OCI-LY7 (cell line): ENCODE measurements at regions of chr3 and their contacts with region 1.

Region 1: GRCh38 chr3:194682694-194683310 is 2.9 kb upstream of the FAM43A start:
- DNase-seq: peak; percentile 89
- H3K4me3 ChIP-seq: no peak overlapping the region
- H3K27ac ChIP-seq: no peak overlapping the region
- H3K4me1 ChIP-seq: peaks cover 37% of the 10 kb centered on the region
- CTCF ChIP-seq: peak; percentile 96

Region 2: GRCh38 chr3:194671900-194672808 is 10.6 kb before region 1 on chr3 and contains the start of gene LSG1:
- CTCF ChIA-PET with region 1: interaction called, 3 read pairs
- POLR2A ChIA-PET with region 1: interaction called, 10 read pairs
- intact Hi-C with region 1: no loop called
- DNase-seq: peak; percentile 97
- H3K4me3 ChIP-seq: peak within 1 kb of the TSS; percentile 91
- H3K27ac ChIP-seq: peak within 1 kb of the TSS; percentile 50
- H3K4me1 ChIP-seq: peaks cover 19% of the 10 kb centered on the region
- CTCF ChIP-seq: no peak
- total RNA-seq, gene LSG1: 52.9 and 59.4 TPM in 2 replicates

Region 3: DNA sequence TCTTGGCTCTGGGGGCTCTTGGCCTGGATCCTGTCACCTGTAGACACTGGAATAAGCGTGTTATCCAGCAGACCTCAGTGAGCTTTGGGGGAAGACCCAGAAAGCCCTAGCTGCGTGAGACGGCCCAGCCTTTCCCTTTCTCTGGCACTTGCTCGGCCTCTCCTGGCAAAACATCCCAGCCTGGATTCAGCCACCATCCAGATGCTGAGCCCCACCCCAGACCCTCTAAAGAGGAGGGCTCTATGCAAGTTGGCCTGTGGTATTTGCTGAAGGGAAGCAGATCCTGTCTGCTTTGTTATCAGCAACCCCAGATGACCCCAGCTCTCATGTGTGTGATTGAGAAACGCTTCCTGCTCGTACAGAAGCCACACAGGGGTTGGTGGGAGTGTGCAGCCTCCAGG is 270.0 kb after region 1 on chr3:
- CTCF ChIA-PET with region 1: interaction called, 3 read pairs
- POLR2A ChIA-PET with region 1: no interaction called
- intact Hi-C with region 1: loop called (anchors 1 kb)
- DNase-seq: no peak
- H3K4me3 ChIP-seq: no peak overlapping the region
- H3K27ac ChIP-seq: no peak overlapping the region
- H3K4me1 ChIP-seq: no peaks in the 10 kb centered on the region
- CTCF ChIP-seq: no peak

Region 4: GRCh38 chr3:195106418-195106906 is 423.7 kb after region 1 on chr3:
- CTCF ChIA-PET with region 1: interaction called, 4 read pairs
- POLR2A ChIA-PET with region 1: interaction called, 3 read pairs
- intact Hi-C with region 1: loop called (anchors 1 kb)
- DNase-seq: peak; percentile 69
- H3K4me3 ChIP-seq: no peak overlapping the region
- H3K27ac ChIP-seq: no peak overlapping the region
- H3K4me1 ChIP-seq: peaks cover 11% of the 10 kb centered on the region
- CTCF ChIP-seq: peak; percentile 95

Region 5: DNA sequence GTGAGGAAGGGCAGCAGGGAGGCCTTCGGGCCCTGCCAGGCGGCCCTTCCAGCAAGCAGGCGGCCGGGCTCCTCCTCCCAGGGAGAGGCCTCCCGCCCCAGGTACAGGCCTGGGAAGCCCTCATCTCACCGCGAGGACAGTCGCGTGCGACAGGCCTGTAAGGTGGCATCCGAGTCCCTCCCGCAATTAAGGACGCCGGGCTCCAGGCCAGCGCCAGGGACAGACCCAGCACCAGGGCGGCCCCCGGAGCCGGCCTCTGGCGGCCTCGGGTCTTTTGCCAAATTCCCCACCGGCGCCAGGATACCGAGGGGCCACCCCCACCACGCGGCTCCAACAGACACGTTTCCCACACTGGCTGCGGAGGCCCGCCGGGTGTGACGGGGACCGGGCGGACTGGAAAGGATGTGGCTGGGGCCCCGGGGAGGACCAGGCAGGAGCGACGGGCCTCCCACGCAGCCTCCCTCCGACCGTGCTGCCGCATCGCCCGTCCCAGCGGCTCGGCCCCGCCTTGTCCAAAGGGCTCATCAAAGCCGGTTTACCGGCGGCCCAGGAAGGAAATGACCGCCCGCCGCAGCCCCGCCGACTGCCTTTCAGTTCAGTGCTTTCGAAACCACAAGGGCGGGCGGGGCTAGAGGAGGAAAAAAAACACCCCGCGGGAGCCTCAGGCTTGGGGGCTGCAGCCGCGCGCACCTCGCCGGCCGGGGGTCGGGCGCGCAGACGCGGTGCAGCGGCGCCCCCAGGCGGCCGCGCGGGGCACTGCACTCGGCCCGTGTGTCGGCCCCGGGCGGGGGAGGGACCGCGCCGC is 576.9 kb after region 1 on chr3:
- CTCF ChIA-PET with region 1: interaction called, 3 read pairs
- POLR2A ChIA-PET with region 1: interaction called, 3 read pairs
- intact Hi-C with region 1: loop called (anchors 1 kb)
- DNase-seq: peak; percentile 94
- H3K4me3 ChIP-seq: peak overlapping the region; percentile 68
- H3K27ac ChIP-seq: peak overlapping the region; percentile 84
- H3K4me1 ChIP-seq: peaks cover 39% of the 10 kb centered on the region
- CTCF ChIP-seq: peak; percentile 64

Region 6: DNA sequence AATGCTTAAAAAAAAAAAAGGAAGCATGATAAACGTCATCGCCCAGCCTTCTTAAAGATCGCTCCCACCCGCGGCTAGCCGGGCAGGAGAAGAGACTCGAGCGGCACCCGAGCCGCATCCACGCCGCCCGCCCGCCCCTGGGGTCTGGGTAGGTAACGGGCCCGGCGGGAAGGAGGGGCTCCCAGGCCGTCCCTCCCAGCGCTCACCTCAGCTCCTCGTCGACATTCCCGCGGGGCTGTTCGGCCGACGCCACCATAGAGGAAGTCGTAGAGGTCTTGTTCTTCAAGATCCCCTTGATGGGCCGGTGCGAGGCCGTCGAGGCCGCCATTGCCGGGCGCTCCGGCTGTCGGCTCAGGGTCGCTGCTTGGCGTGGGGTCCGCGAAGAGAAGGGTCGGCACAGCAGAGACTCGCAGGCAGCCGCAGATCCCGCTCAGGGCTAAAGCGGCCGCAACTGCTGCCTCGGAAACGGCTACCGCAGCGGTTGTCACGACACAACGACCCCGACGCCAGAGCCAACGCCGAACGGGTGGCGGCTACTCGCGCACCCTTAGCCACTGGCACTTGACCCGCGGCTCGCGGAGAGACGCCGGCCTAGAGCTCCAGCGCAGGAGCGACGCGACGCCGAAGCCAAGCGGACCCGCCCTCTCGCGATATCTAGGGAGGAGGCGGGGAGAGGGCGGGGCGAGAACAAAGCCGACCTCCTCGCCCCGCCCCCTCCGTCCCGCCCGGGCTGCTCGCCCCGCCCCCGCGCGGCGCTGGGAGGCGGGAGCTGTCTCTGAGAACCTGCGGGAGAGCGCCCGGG is 860.1 kb after region 1 on chr3 and contains the start of gene PPP1R2:
- CTCF ChIA-PET with region 1: no interaction called
- POLR2A ChIA-PET with region 1: no interaction called
- intact Hi-C with region 1: loop called (anchors 5 kb)
- DNase-seq: peak; percentile 95
- H3K4me3 ChIP-seq: peak within 1 kb of the TSS; percentile 89
- H3K27ac ChIP-seq: peak within 1 kb of the TSS; percentile 89
- H3K4me1 ChIP-seq: peaks cover 59% of the 10 kb centered on the region
- CTCF ChIP-seq: no peak
- total RNA-seq, gene PPP1R2: 239 and 294 TPM in 2 replicates